GM12878 (cell line): ENCODE measurements at regions of chr1 and their contacts with region 1.

Region 1: DNA sequence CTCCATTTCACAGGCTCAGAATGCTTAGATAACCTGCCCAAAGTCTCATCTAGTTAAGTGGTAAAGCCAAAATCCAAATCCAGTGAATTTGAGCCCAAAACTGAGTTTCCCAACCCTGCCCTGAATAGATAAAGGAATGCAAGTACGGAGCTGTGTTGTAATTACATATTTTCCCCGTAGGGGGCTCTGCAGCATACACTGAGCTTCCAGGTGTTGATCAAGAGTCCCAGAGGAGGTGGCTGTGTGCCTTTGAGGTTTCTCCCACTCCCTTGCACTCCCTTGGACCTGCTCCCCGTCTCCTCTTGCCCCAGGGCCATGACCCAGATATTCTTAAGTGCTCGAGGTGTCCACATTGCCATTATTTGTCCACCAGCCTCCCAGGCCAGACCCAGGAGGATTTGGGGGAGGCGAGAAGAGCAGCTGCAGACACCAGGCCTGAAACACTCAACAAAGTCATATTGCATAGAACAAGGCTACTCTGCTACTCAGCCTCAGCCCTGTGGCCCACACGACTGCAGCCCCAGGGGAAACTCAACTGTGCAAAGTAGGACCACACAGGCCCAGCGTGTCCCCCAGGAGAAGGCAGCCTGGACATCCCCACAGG is 18.4 kb upstream of the LY9 start:
- DNase-seq: no peak
- ATAC-seq: peak; percentile 36
- H3K4me3 ChIP-seq: no peak overlapping the region
- H3K27ac ChIP-seq: no peak overlapping the region
- H3K4me1 ChIP-seq: peaks cover 50% of the 10 kb centered on the region
- H3K27me3 ChIP-seq: no peaks in the 10 kb centered on the region
- CTCF ChIP-seq: peak; percentile 66 to 78 (median 67)
- EP300 ChIP-seq: no peak
- POLR2A ChIP-seq: no peak
- RAD21 ChIP-seq: peak; percentile 81

Region 2: GRCh38 chr1:160675641-160676410 is 101.8 kb before region 1 on chr1:
- CTCF ChIA-PET with region 1: interaction called, 47 read pairs
- POLR2A ChIA-PET with region 1: interaction called, 7 read pairs
- RAD21 ChIA-PET with region 1: interaction called, 27 read pairs
- SMC1A ChIA-PET with region 1: interaction called, 24 read pairs
- in situ Hi-C with region 1: no loop called
- intact Hi-C with region 1: no loop called
- DNase-seq: peak; percentile 76
- ATAC-seq: peak; percentile 88
- H3K4me3 ChIP-seq: peak overlapping the region; percentile 2; the same call in 1 of the 2 replicates
- H3K27ac ChIP-seq: peak overlapping the region; percentile 62
- H3K4me1 ChIP-seq: peaks cover 48% of the 10 kb centered on the region
- H3K27me3 ChIP-seq: no peaks in the 10 kb centered on the region
- CTCF ChIP-seq: peak; percentile 86 to 95 (median 92)
- EP300 ChIP-seq: peak in 1 of 2 experiments; percentile 10; a peak in 1 of 4 replicates
- POLR2A ChIP-seq: peak; percentile 31; the same call in 1 of the 2 replicates
- RAD21 ChIP-seq: peak; percentile 87

Region 3: GRCh38 chr1:160717306-160717705 is 60.3 kb before region 1 on chr1:
- CTCF ChIA-PET with region 1: interaction called, 22 read pairs
- POLR2A ChIA-PET with region 1: interaction called, 3 read pairs
- RAD21 ChIA-PET with region 1: interaction called, 8 read pairs
- SMC1A ChIA-PET with region 1: interaction called, 301 read pairs
- in situ Hi-C with region 1: no loop called
- intact Hi-C with region 1: no loop called
- DNase-seq: no peak
- ATAC-seq: no peak
- H3K4me3 ChIP-seq: no peak overlapping the region
- H3K27ac ChIP-seq: no peak overlapping the region
- H3K4me1 ChIP-seq: peaks cover 14% of the 10 kb centered on the region
- H3K27me3 ChIP-seq: no peaks in the 10 kb centered on the region
- CTCF ChIP-seq: no peak
- EP300 ChIP-seq: no peak
- POLR2A ChIP-seq: no peak
- RAD21 ChIP-seq: no peak

Region 4: DNA sequence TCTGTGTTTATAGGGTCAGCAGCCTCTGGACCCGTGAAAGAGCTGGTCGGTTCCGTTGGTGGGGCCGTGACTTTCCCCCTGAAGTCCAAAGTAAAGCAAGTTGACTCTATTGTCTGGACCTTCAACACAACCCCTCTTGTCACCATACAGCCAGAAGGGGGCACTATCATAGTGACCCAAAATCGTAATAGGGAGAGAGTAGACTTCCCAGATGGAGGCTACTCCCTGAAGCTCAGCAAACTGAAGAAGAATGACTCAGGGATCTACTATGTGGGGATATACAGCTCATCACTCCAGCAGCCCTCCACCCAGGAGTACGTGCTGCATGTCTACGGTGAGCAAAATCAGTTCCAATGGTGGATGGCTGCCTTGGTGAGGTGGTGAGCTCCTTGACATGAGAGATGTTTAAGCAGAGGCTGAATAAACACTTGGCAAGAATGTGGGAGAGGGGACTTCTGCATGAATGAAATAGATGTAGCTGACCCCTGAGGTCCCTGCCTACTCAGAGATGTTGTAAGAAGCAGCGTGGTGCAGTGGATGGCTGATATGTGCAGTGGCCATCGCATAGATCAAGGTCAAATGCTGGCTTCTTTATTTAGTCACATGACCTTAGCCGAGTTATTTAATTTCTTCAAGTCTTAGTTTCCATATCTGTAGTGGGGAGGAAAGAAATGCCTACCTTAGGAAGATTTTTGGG is 29.3 kb before region 1 on chr1:
- CTCF ChIA-PET with region 1: interaction called, 49 read pairs
- POLR2A ChIA-PET with region 1: interaction called, 12 read pairs
- RAD21 ChIA-PET with region 1: interaction called, 27 read pairs
- SMC1A ChIA-PET with region 1: interaction called, 447 read pairs
- in situ Hi-C with region 1: no loop called
- intact Hi-C with region 1: no loop called
- DNase-seq: no peak
- ATAC-seq: no peak
- H3K4me3 ChIP-seq: no peak overlapping the region
- H3K27ac ChIP-seq: no peak overlapping the region
- H3K4me1 ChIP-seq: peaks cover 51% of the 10 kb centered on the region
- H3K27me3 ChIP-seq: no peaks in the 10 kb centered on the region
- CTCF ChIP-seq: peak; percentile 18 to 47 (median 38); a peak in 4 of 6 replicates
- EP300 ChIP-seq: no peak
- POLR2A ChIP-seq: no peak; the same call in 1 of the 2 replicates
- RAD21 ChIP-seq: no peak

Region 5: GRCh38 chr1:160795951-160796383 is 18.4 kb after region 1 on chr1 and contains the start of gene LY9:
- CTCF ChIA-PET with region 1: interaction called, 192 read pairs
- POLR2A ChIA-PET with region 1: interaction called, 21 read pairs
- RAD21 ChIA-PET with region 1: interaction called, 53 read pairs
- SMC1A ChIA-PET with region 1: interaction called, 86 read pairs
- in situ Hi-C with region 1: no loop called
- intact Hi-C with region 1: no loop called
- DNase-seq: peak; percentile 97
- ATAC-seq: peak; percentile 79
- H3K4me3 ChIP-seq: peak within 1 kb of the TSS; percentile 63
- H3K27ac ChIP-seq: peak within 1 kb of the TSS; percentile 78
- H3K4me1 ChIP-seq: peaks cover 42% of the 10 kb centered on the region
- H3K27me3 ChIP-seq: no peaks in the 10 kb centered on the region
- CTCF ChIP-seq: no peak
- EP300 ChIP-seq: peak; percentile 96 to 98
- POLR2A ChIP-seq: peak; percentile 66
- RAD21 ChIP-seq: no peak
- polyA plus RNA-seq, gene LY9: 2.7 to 2.8 TPM

Region 6: DNA sequence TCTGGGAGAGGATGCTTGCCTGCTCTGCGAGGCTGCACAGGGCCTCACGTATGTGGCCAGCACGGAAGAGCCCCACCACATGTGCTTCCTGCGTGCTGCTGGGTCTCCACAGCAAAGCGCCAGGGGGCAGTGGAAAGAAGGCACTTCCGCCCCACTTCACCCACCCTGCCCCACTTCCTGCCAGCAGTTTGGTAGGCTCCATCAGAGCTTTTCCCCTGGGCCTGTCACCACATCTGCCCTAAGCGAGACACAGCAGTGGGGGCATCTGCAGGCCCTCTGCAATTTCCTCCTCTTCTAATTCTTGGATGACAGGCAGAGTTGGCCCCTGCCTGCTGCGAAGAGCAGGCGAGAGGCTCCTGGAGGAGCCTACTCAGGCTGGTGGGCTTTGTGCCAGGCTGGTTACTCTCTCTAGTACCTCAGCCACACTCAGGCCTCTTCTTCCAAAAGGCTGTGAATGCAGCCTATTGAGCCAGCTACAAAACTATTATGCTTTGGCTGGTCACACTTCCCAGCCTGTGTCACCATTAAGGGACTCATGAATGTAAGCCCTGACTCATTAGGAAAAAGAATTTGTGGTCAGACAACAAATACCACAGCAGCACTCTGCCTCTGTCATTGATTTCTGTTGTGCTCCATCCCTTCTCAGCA is 60.1 kb after region 1 on chr1:
- CTCF ChIA-PET with region 1: interaction called, 163 read pairs
- POLR2A ChIA-PET with region 1: interaction called, 7 read pairs
- RAD21 ChIA-PET with region 1: interaction called, 193 read pairs
- SMC1A ChIA-PET with region 1: interaction called, 123 read pairs
- in situ Hi-C with region 1: loop called (anchors 5 kb)
- intact Hi-C with region 1: no loop called
- DNase-seq: peak; percentile 78
- ATAC-seq: peak; percentile 95
- H3K4me3 ChIP-seq: no peak overlapping the region
- H3K27ac ChIP-seq: peak overlapping the region; percentile 87
- H3K4me1 ChIP-seq: peaks cover 28% of the 10 kb centered on the region
- H3K27me3 ChIP-seq: no peaks in the 10 kb centered on the region
- CTCF ChIP-seq: peak; percentile 47 to 55 (median 53)
- EP300 ChIP-seq: peak in 1 of 2 experiments; percentile 47; a peak in 1 of 4 replicates
- POLR2A ChIP-seq: peak; percentile 70
- RAD21 ChIP-seq: peak; percentile 34; the same call in 1 of the 2 replicates

Region 7: DNA sequence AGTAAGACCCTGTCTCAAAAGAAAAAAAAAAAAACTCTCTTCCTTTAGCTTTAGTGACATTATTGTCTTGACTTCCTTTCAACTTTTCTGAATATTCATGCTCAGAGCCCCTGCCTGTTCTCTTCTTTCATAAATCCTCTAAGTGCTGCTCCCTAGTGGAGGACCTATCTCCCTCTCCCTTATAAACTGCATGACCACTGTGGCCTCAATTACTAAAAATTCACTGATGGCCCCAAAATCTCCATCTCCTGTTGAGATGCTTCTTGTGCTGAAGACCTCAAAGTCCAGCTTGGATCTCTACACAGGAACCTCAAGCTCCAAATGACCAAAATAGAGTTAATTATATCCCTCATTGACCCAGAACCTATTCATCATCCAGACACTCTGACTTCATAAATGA is 99.6 kb after region 1 on chr1:
- CTCF ChIA-PET with region 1: interaction called, 20 read pairs
- POLR2A ChIA-PET with region 1: no interaction called
- RAD21 ChIA-PET with region 1: interaction called, 5 read pairs
- SMC1A ChIA-PET with region 1: interaction called, 19 read pairs
- in situ Hi-C with region 1: no loop called
- intact Hi-C with region 1: no loop called
- DNase-seq: no peak
- ATAC-seq: peak; percentile 75
- H3K4me3 ChIP-seq: no peak overlapping the region
- H3K27ac ChIP-seq: no peak overlapping the region
- H3K4me1 ChIP-seq: no peaks in the 10 kb centered on the region
- H3K27me3 ChIP-seq: no peaks in the 10 kb centered on the region
- CTCF ChIP-seq: peak; percentile 32 to 37 (median 37); a peak in 5 of 6 replicates
- EP300 ChIP-seq: no peak
- POLR2A ChIP-seq: no peak
- RAD21 ChIP-seq: peak; percentile 47